ENCODE measurements at regions of chr3 and their contacts with region 1.

Region 1: DNA sequence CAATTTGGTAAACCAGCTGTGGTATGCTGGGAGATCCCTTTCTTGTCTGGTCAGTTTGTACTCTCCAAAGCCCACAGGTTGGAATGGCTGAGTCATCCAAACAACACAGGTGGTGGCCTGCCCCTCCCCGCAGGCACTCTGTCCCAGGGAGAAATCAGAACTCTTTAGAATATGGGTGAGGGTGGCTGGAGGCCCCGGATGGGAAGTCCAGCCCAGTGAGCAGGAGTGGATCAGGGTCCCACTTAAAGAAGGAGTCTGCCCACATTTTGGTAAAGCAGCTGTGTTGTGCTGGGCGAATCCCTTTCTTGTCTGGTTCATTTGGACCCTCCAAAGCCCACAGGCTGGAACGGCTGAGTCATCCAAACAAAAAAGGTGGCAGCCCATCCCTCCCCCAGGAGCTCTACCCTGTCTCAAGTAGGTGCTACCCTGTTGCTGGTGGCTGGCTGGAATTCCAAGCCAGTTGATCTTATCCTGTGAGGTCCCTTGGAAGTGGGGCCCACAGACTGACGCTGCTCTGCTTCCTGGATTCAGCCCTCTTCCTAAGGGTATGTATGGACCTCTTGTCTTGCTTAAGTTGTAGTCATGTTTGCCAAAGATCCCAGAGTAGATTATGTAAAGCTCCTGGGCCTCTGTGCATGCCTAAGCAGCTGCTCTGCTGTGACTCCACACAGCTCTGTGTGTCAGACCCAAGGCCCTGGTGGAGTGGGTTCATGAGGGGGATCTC is 44.6 kb downstream of the CCR1 start:
- DNase-seq: peak; percentile 78
- H3K4me3 Mint-ChIP-seq: peak overlapping the region; percentile 51
- H3K27ac Mint-ChIP-seq: peak overlapping the region; percentile 88
- H3K4me1 Mint-ChIP-seq: peaks cover 21% of the 10 kb centered on the region
- H3K27me3 Mint-ChIP-seq: no peaks in the 10 kb centered on the region
- CTCF ChIP-seq: no peak

Region 2: DNA sequence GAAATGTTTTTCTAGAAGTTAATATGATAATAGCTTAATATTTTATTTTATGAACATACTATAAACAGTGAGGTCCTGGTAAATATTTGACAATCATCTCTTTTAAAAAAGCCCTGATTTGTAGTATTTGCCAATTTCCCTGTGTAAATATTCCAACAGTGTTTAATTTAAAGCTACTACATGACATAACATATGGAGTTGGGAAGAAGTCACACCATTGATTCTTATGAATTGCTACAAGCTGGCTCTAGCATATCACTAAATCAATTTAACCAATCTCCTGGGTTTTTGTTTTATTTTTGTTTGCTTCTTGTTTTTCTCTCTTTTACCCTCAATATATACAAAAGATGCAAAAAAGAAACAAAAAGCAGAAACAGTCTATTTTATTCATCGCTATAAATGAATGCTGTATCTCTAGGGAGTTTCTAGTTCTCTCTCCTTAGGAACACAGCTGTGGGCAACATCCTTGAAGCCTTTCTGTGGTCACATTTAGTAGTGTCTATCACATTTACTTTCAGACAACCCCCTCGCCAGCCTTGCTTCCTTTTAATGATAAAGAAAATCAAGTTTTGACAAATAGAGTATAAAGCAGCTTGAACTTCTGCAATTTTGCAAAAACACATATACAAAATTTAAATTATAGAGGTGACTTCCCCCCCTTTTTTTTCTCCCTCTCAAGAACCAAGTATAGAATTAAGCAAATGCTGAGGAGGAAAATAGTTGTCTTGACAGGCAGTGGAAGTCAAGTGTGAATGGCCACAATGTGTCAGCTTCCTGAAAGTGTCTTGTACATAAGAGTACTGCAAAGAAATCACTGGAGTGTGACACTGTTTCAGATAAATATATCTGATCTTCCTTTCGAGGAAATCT is 23.2 kb after region 1 on chr3:
- CTCF ChIA-PET with region 1: interaction called, 3 read pairs
- POLR2A ChIA-PET with region 1: interaction called, 10 read pairs
- intact Hi-C with region 1: no loop called
- DNase-seq: no peak
- H3K4me3 Mint-ChIP-seq: no peak overlapping the region
- H3K27ac Mint-ChIP-seq: no peak overlapping the region
- H3K4me1 Mint-ChIP-seq: peaks cover 18% of the 10 kb centered on the region
- H3K27me3 Mint-ChIP-seq: no peaks in the 10 kb centered on the region
- CTCF ChIP-seq: no peak

Region 3: DNA sequence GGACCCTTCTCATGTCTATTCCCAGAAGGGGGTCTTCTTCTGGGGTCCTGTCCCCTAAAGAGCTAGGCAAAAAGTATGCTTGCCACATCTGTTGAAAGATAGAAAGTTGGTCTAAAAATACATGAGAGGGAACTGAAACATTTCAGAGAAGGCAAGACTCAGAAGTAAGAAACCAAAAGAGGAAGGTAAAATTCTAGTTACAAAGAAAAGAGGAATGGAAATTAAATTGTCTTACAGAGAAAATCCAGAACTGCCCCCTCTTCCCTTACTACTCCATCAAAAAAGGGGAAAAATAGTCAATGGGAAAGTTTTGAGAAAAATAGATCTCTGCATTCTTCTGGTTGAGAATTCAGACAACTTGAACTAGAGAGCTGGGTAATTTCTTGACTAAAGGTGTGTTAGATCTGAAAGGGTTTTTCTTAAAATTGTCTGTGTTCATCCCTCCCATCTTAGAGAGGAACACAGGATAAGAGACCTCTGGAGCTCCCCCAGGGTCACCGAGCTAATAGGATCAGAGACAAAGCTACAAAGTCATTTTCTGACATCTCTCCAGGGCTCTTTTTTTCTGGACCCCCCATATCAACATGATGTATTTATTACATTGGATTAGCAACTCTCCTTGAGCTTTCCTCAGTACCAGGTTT is 158.1 kb after region 1 on chr3:
- CTCF ChIA-PET with region 1: no interaction called
- POLR2A ChIA-PET with region 1: no interaction called
- intact Hi-C with region 1: no loop called
- DNase-seq: no peak
- H3K4me3 Mint-ChIP-seq: no peak overlapping the region
- H3K27ac Mint-ChIP-seq: no peak overlapping the region
- H3K4me1 Mint-ChIP-seq: no peaks in the 10 kb centered on the region
- H3K27me3 Mint-ChIP-seq: peaks cover 36% of the 10 kb centered on the region
- CTCF ChIP-seq: no peak

Measured in MCF 10A (cell line).